GM12878 (cell line): ENCODE measurements at regions of chr5 and their contacts with region 1.

Region 1: GRCh38 chr5:88883059-88883835 is at the start of gene MEF2C:
- DNase-seq: no peak
- ATAC-seq: peak; percentile 45
- H3K4me3 ChIP-seq: peak within 1 kb of the TSS; percentile 85
- H3K27ac ChIP-seq: peak within 1 kb of the TSS; percentile 98
- H3K4me1 ChIP-seq: peaks cover 3% of the 10 kb centered on the region
- H3K27me3 ChIP-seq: no peaks in the 10 kb centered on the region
- CTCF ChIP-seq: no peak
- EP300 ChIP-seq: no peak
- POLR2A ChIP-seq: peak; percentile 94
- RAD21 ChIP-seq: no peak
- polyA plus RNA-seq, gene MEF2C: 143 to 147 TPM

Region 2: GRCh38 chr5:88819301-88819999 is 63.8 kb before region 1 on chr5:
- CTCF ChIA-PET with region 1: interaction called, 5 read pairs
- POLR2A ChIA-PET with region 1: interaction called, 31 read pairs
- RAD21 ChIA-PET with region 1: interaction called, 82 read pairs
- SMC1A ChIA-PET with region 1: interaction called, 182 read pairs
- in situ Hi-C with region 1: no loop called
- intact Hi-C with region 1: no loop called
- DNase-seq: no peak
- ATAC-seq: peak; percentile 35
- H3K4me3 ChIP-seq: peak overlapping the region; percentile 67
- H3K27ac ChIP-seq: peak overlapping the region; percentile 86
- H3K4me1 ChIP-seq: peaks cover 23% of the 10 kb centered on the region
- H3K27me3 ChIP-seq: no peaks in the 10 kb centered on the region
- CTCF ChIP-seq: no peak
- EP300 ChIP-seq: no peak
- POLR2A ChIP-seq: no peak
- RAD21 ChIP-seq: no peak

Region 3: DNA sequence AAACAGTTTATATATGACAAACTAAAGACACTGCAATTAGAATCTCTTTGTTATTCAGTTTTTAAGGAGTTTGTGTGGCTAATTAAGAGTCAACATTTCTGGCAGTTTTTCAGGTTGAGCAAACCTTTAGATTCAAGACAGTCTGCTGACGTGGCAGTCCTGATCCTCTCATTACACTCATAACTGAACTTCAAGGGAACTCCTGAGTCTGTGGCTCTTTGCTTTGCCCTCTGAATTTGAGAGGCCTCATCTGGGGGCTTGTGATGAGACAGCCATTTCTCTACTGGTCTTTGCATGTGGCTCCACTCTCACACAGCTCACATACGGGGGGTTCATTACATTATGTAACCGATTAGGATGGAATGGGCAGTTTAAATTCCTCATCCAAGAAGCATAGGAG is 182.7 kb after region 1 on chr5:
- CTCF ChIA-PET with region 1: no interaction called
- POLR2A ChIA-PET with region 1: no interaction called
- RAD21 ChIA-PET with region 1: interaction called, 19 read pairs
- SMC1A ChIA-PET with region 1: interaction called, 7 read pairs
- in situ Hi-C with region 1: no loop called
- intact Hi-C with region 1: loop called (anchors 2 kb)
- DNase-seq: peak; percentile 65
- ATAC-seq: peak; percentile 92
- H3K4me3 ChIP-seq: no peak overlapping the region
- H3K27ac ChIP-seq: peak overlapping the region; percentile 83
- H3K4me1 ChIP-seq: peaks cover 10% of the 10 kb centered on the region
- H3K27me3 ChIP-seq: no peaks in the 10 kb centered on the region
- CTCF ChIP-seq: no peak
- EP300 ChIP-seq: peak; percentile 56 to 68; a peak in 2 of 4 replicates
- POLR2A ChIP-seq: 0 out of 2 replicates have a peak, but pooled peaks have one; percentile 19
- RAD21 ChIP-seq: peak; percentile 27; the same call in 1 of the 2 replicates

Region 4: DNA sequence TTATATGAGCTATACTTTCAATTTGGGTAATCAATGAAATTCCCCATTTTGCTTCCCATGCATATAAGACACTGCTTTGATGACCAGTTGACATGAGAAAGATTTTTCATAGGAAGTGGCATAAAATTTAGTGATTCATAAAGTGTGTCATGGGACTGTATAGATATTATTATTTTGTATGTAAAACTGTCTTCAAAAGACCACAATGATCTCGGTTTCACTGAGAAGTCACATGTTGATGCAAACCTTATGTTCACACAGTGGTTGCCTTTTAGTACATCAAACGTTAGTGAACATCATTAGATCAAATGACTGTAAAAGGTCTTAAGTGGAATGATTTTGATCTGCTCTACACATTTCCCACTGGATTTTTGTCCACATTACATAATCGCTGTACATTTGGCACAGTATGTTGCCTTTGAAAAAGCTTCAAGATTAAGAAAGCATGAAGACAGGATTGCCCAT is 348.9 kb after region 1 on chr5:
- CTCF ChIA-PET with region 1: interaction called, 4 read pairs
- POLR2A ChIA-PET with region 1: interaction called, 3 read pairs
- RAD21 ChIA-PET with region 1: interaction called, 6 read pairs
- SMC1A ChIA-PET with region 1: interaction called, 6 read pairs
- in situ Hi-C with region 1: no loop called
- intact Hi-C with region 1: loop called (anchors 2 kb)
- DNase-seq: peak; percentile 96
- ATAC-seq: peak; percentile 90
- H3K4me3 ChIP-seq: 0 out of 2 replicates have a peak overlapping the region, but pooled peaks have one; percentile 25
- H3K27ac ChIP-seq: peak overlapping the region; percentile 97
- H3K4me1 ChIP-seq: peaks cover 43% of the 10 kb centered on the region
- H3K27me3 ChIP-seq: no peaks in the 10 kb centered on the region
- CTCF ChIP-seq: no peak
- EP300 ChIP-seq: peak; percentile 96 to 98
- POLR2A ChIP-seq: no peak
- RAD21 ChIP-seq: no peak

Region 5: GRCh38 chr5:89343666-89344065 is 460.4 kb after region 1 on chr5:
- CTCF ChIA-PET with region 1: no interaction called
- POLR2A ChIA-PET with region 1: interaction called, 3 read pairs
- RAD21 ChIA-PET with region 1: interaction called, 4 read pairs
- SMC1A ChIA-PET with region 1: no interaction called
- in situ Hi-C with region 1: no loop called
- intact Hi-C with region 1: loop called (anchors 2 kb)
- DNase-seq: peak; percentile 97
- ATAC-seq: peak; percentile 86
- H3K4me3 ChIP-seq: no peak overlapping the region
- H3K27ac ChIP-seq: peak overlapping the region; percentile 93
- H3K4me1 ChIP-seq: peaks cover 37% of the 10 kb centered on the region; the same call in 1 of the 2 replicates
- H3K27me3 ChIP-seq: no peaks in the 10 kb centered on the region
- CTCF ChIP-seq: no peak
- EP300 ChIP-seq: peak; percentile 100
- POLR2A ChIP-seq: no peak
- RAD21 ChIP-seq: peak; percentile 17

Region 6: GRCh38 chr5:90020575-90021539 is 1137.6 kb after region 1 on chr5:
- CTCF ChIA-PET with region 1: no interaction called
- POLR2A ChIA-PET with region 1: no interaction called
- RAD21 ChIA-PET with region 1: no interaction called
- SMC1A ChIA-PET with region 1: no interaction called
- in situ Hi-C with region 1: no loop called
- intact Hi-C with region 1: loop called (anchors 5 kb)
- DNase-seq: peak; percentile 87
- ATAC-seq: peak; percentile 98
- H3K4me3 ChIP-seq: no peak overlapping the region
- H3K27ac ChIP-seq: peak overlapping the region; percentile 56
- H3K4me1 ChIP-seq: peaks cover 10% of the 10 kb centered on the region
- H3K27me3 ChIP-seq: no peaks in the 10 kb centered on the region
- CTCF ChIP-seq: no peak
- EP300 ChIP-seq: peak; percentile 63 to 82
- POLR2A ChIP-seq: no peak
- RAD21 ChIP-seq: peak; percentile 26; the same call in 1 of the 2 replicates